ENCODE measurements at regions of chr1 and their contacts with region 1.

Region 1: GRCh38 chr1:93814059-93814794 is 64.8 kb downstream of the DNTTIP2 start:
- DNase-seq: peak; percentile 17 to 39
- ATAC-seq: peak; percentile 84 to 90
- H3K4me3 ChIP-seq: no peak overlapping the region
- H3K27ac ChIP-seq: no peak overlapping the region
- H3K4me1 ChIP-seq: peaks cover 0 to 3% of the 10 kb centered on the region in 2 donors
- H3K27me3 ChIP-seq: no peaks in the 10 kb centered on the region
- CTCF ChIP-seq: peak; percentile 84 to 93 (median 92)
- POLR2A ChIP-seq: no peak

Region 2: DNA sequence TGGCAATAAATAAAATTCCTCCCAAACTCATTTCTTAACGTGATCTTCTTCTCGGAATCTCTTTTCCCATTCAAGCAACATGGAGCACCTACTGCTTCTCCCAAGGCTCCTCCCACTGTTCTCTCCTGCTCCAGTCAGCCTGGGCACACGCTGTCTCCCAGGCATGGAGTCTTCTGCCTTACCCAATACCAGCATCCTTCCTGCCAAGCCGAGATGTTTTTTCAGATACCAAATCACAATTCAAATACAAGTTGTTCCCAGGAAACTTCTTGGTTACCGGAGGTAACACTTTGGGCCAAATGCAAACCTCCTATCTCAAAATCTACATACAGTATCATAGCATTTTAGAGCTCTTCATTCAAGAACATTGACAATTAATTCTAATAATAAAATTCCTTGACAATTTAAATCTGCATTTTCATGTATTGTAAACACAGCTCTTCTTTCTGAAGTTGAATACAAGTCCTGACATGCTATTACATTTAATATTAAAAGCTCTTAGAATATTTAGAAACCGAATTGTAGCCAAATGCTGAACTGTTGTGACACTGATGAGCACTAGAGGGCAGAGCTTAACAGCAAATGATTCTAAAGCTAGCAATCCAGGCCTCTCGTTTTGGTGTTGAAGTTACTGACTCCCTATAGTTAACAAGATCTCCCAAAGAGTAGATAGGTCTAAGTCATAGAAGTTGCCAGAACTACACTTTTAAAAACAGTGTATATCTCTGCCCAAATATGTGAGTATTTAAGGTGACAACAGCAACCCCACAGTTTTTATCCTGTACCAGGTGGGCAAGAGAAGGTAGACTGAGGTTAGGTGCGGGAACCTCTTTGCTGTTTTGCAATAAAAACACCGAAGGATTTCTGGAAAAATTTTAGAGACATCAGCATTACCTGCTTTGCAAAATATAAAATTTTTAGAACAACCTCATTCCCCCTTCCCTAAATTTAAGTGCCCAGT is 184.8 kb before region 1 on chr1:
- in situ Hi-C with region 1: loop called (anchors 5 to 10 kb)
- intact Hi-C with region 1: loop called (anchors 2 kb)
- DNase-seq: peak; percentile 55 to 62
- ATAC-seq: peak; percentile 83 to 90
- H3K4me3 ChIP-seq: no peak overlapping the region
- H3K27ac ChIP-seq: peak overlapping the region in 3 of 4 donors; percentile 18 to 77 (median 37)
- H3K4me1 ChIP-seq: peaks cover under 1 to 8% of the 10 kb centered on the region in 2 donors
- H3K27me3 ChIP-seq: no peaks in the 10 kb centered on the region
- CTCF ChIP-seq: peak; percentile 75 to 93 (median 80)
- POLR2A ChIP-seq: no peak

Region 3: DNA sequence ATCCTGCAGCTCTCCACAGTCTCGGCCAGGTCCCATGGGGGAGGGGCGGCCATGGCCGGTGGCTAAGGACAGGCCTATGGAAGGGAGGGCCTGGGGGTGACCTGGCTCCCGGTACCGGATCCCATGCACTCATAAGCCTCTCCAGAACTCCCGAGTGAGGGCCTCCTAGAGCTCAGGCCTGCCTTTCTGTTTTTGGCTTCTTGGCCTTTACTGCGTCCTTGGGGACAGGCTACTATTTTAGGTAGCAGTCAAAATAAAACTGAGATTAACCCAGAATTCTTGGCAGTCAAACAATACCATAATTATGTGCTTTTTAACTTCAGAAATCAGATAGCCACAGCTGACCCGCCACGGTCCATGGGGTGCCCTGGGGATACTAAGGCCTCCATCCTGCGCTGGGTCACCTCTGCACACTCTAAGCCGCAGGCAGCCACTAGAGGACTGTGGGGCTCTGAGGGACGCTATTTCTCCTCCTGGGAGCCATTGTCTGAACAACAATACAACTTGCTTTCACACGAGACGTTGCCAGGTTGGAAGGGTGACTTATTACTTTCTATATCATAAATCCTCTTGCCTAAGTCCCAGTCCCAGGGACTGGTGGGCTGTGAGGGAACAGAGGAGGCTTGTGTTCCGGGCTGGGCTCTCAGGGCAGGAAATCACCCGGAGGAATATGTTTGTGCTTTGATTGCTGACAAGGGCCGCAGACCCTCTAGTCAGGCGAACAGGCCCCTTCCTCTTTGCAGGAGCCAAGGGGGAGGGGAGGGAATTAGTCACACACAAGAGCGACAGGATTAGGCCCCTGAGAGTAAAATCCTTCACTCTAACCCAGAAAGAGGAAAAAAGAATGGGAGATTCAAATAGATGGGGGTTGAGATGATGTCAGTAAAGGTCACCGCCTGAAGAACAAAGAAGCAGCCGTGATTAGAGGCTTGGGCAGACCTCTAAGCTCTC is 91.9 kb before region 1 on chr1:
- in situ Hi-C with region 1: no loop called
- intact Hi-C with region 1: no loop called
- DNase-seq: no peak
- ATAC-seq: peak; percentile 48 to 54
- H3K4me3 ChIP-seq: no peak overlapping the region
- H3K27ac ChIP-seq: peak overlapping the region; percentile 42 to 64 (median 58)
- H3K4me1 ChIP-seq: peaks cover 23% of the 10 kb centered on the region in 2 donors
- H3K27me3 ChIP-seq: no peaks in the 10 kb centered on the region
- CTCF ChIP-seq: no peak
- POLR2A ChIP-seq: no peak

Region 4: GRCh38 chr1:93749894-93750301 is 64.3 kb before region 1 on chr1:
- in situ Hi-C with region 1: no loop called
- intact Hi-C with region 1: loop called (anchors 2 kb)
- DNase-seq: no peak
- ATAC-seq: no peak
- H3K4me3 ChIP-seq: no peak overlapping the region
- H3K27ac ChIP-seq: no peak overlapping the region
- H3K4me1 ChIP-seq: peaks cover 26 to 36% of the 10 kb centered on the region in 2 donors
- H3K27me3 ChIP-seq: no peaks in the 10 kb centered on the region
- CTCF ChIP-seq: no peak
- POLR2A ChIP-seq: no peak

Region 5: GRCh38 chr1:95072532-95073419 is 1258.5 kb after region 1 on chr1 and contains the start of gene ALG14:
- in situ Hi-C with region 1: no loop called
- intact Hi-C with region 1: no loop called
- DNase-seq: peak; percentile 91 to 92
- ATAC-seq: peak; percentile 99 to 100
- H3K4me3 ChIP-seq: peak within 1 kb of the TSS; percentile 73 to 83 (median 81)
- H3K27ac ChIP-seq: peak within 1 kb of the TSS; percentile 88 to 97 (median 91)
- H3K4me1 ChIP-seq: peaks cover 5 to 7% of the 10 kb centered on the region in 2 donors
- H3K27me3 ChIP-seq: no peaks in the 10 kb centered on the region
- CTCF ChIP-seq: no peak
- POLR2A ChIP-seq: peak; percentile 53 to 71
- total RNA-seq, gene ALG14: 0.24 to 0.97 (median 0.77) TPM

Measured in gastrocnemius medialis (tissue), 4 donors.